ENCODE measurements at regions of chrX and their contacts with region 1.

Region 1: GRCh38 chrX:153708415-153708814 is 15.8 kb downstream of the BCAP31 start:
- DNase-seq: peak; percentile 77
- H3K4me3 ChIP-seq: no peak overlapping the region
- H3K27ac ChIP-seq: no peak overlapping the region
- H3K4me1 ChIP-seq: peaks cover 12% of the 10 kb centered on the region
- H3K27me3 ChIP-seq: no peaks in the 10 kb centered on the region
- CTCF ChIP-seq: peak; percentile 66 to 67
- POLR2A ChIP-seq: no peak

Region 2: GRCh38 chrX:153554519-153555167 is 153.8 kb before region 1 on chrX:
- CTCF ChIA-PET with region 1: interaction called, 11 read pairs
- POLR2A ChIA-PET with region 1: no interaction called
- dilution Hi-C with region 1: no loop called
- intact Hi-C with region 1: no loop called
- DNase-seq: peak; percentile 24
- H3K4me3 ChIP-seq: no peak overlapping the region
- H3K27ac ChIP-seq: no peak overlapping the region
- H3K4me1 ChIP-seq: no peaks in the 10 kb centered on the region
- H3K27me3 ChIP-seq: no peaks in the 10 kb centered on the region
- CTCF ChIP-seq: peak; percentile 48 to 71
- POLR2A ChIP-seq: no peak

Region 3: GRCh38 chrX:153687121-153688039 is 21.0 kb before region 1 on chrX and contains the start of gene SLC6A8:
- CTCF ChIA-PET with region 1: interaction called, 30 read pairs
- POLR2A ChIA-PET with region 1: interaction called, 3 read pairs
- dilution Hi-C with region 1: no loop called
- intact Hi-C with region 1: no loop called
- DNase-seq: peak; percentile 27
- H3K4me3 ChIP-seq: peak within 1 kb of the TSS in 1 of 3 experiments; percentile 40
- H3K27ac ChIP-seq: no peak within 1 kb of the TSS
- H3K4me1 ChIP-seq: peaks cover 4% of the 10 kb centered on the region
- H3K27me3 ChIP-seq: no peaks in the 10 kb centered on the region
- CTCF ChIP-seq: peak in 1 of 2 donors; percentile 55
- POLR2A ChIP-seq: peak; percentile 40
- total RNA-seq, gene SLC6A8: 23.6 and 28.8 TPM in 2 replicates

Region 4: GRCh38 chrX:153724252-153725040 is 16.0 kb after region 1 on chrX and contains the starts of genes ABCD1 and BCAP31:
- CTCF ChIA-PET with region 1: interaction called, 10 read pairs
- POLR2A ChIA-PET with region 1: no interaction called
- dilution Hi-C with region 1: no loop called
- intact Hi-C with region 1: no loop called
- DNase-seq: peak; percentile 84
- H3K4me3 ChIP-seq: peak within 1 kb of the TSS; percentile 41 to 73 (median 54)
- H3K27ac ChIP-seq: peak within 1 kb of the TSS; percentile 47
- H3K4me1 ChIP-seq: peaks cover 28% of the 10 kb centered on the region
- H3K27me3 ChIP-seq: no peaks in the 10 kb centered on the region
- CTCF ChIP-seq: no peak
- POLR2A ChIP-seq: peak; percentile 53
- total RNA-seq, gene ABCD1: 12.9 and 14.3 TPM in 2 replicates
- total RNA-seq, gene BCAP31: 198 and 203 TPM in 2 replicates

Region 5: DNA sequence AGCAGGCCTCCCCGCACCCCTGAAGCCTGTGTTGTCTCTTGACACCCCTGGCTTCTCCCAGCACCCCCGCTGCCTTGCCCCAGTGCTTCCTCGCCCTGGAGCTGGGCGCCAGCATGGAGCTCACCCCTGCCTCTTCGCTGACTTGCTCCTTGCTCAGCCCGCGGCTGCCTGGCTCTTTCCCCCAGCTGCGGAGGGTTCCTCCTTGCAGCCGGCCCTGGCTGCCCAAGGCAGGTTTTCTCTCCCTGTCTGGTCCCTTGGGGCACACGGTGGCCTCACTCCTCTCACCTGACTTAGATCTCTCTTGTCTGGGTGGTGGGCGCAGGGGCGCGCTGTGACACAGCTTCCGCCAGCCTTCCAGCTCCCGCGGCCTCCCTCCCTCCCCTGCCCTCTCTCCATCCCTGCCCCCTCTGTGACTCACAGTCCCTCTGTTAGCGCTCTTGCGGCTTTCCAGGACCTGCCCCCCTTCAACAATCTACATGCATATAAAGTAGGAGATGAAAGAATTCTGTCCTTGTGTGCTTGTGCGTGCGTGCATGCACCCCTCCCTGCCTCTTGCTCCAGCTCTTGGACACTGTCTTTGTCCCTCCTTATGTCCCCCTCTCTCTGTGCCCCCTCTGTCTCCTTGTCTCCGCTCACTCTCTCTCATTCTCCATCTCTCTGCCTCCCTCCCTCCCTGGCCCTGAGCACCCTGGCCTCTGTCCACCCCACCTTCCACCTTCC is 57.8 kb after region 1 on chrX:
- CTCF ChIA-PET with region 1: no interaction called
- POLR2A ChIA-PET with region 1: no interaction called
- dilution Hi-C with region 1: no loop called
- intact Hi-C with region 1: no loop called
- DNase-seq: peak; percentile 58
- H3K4me3 ChIP-seq: peak overlapping the region in 2 of 3 experiments; percentile 2 to 38
- H3K27ac ChIP-seq: peak overlapping the region; percentile 75
- H3K4me1 ChIP-seq: peaks cover 20% of the 10 kb centered on the region
- H3K27me3 ChIP-seq: no peaks in the 10 kb centered on the region
- CTCF ChIP-seq: no peak
- POLR2A ChIP-seq: no peak

Region 6: DNA sequence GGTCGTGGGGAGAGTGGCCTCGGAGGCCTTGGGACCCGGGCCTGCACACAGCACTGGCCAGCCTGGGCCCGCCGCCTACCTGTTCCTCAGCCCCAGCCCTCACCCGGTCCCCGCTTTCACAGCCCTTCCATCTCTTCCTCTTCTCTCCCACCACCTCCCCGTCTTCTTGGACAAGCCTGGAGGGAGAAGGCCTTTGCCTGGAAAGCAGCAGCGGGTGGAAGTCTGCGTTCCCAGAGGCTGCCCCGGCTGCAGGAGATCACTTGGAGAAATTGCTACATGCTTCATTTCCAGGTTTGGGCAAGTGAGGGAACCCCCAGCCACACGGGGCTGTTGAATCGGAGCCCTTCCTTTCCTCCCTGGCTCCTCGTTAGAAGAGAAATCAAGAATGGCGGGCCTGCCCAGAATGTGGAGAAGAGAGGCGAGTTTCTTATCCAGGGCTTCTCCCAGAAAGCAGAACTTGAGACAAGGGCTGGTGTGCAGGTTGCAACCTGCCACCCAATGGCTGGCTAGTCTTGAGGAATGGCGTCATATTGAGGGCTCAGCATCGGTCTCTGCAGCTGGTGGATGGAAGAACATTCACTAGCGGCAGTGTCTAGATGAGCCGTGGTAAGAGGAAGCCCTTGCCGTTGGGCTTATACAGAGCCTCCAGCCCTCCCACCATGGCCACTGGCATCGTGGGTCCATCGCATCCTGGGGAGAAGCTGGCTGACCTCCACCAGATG is 123.2 kb after region 1 on chrX:
- CTCF ChIA-PET with region 1: no interaction called
- POLR2A ChIA-PET with region 1: no interaction called
- dilution Hi-C with region 1: no loop called
- intact Hi-C with region 1: no loop called
- DNase-seq: no peak
- H3K4me3 ChIP-seq: no peak overlapping the region
- H3K27ac ChIP-seq: no peak overlapping the region
- H3K4me1 ChIP-seq: no peaks in the 10 kb centered on the region
- H3K27me3 ChIP-seq: peaks cover 31 to 38% of the 10 kb centered on the region in 2 experiments
- CTCF ChIP-seq: no peak
- POLR2A ChIP-seq: no peak

Region 7: DNA sequence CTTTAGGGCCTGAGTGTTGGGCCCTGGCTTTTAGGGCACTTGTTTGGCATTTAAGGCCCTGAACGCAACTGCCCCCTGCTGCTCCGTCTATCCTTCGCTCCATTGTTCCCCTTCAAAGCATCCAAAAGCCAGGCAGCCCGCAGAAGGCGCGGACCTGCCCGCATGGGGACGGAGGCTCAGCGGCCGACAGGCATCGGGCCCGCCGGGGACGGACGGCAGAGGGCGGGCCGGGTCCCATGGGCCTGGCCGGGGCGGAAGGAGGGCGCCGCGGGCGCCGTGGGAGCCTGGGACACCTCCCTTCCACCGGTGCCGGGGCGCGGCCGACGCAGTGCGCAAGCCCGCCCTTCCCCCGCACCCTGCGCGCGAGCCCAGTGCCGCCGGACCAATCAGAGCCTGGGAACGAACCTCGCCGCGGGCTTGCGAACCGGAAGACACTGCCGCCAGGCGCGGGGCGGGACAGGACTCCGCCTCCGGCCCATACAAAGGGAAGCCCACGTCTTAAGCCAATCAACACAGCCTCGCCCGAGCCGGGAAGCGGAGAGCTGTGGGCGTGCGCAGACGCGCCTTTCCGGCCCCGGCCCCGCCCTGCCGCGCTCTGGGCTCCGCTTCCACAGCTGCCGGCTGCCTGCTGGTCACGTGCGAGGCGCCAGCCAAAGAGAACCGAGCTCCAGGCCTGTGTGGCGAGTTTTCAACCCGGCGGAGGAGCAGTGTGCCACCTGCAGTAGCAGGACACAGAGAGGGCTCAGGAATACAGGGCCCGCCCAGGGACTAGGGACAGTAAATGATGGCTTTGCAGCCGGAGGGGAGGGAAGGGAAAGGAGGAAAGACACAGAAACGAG is 219.7 kb after region 1 on chrX:
- CTCF ChIA-PET with region 1: no interaction called
- POLR2A ChIA-PET with region 1: no interaction called
- dilution Hi-C with region 1: no loop called
- intact Hi-C with region 1: no loop called
- DNase-seq: peak; percentile 98
- H3K4me3 ChIP-seq: peak overlapping the region in 2 of 3 experiments; percentile 44 to 49
- H3K27ac ChIP-seq: peak overlapping the region; percentile 100
- H3K4me1 ChIP-seq: peaks cover 44% of the 10 kb centered on the region
- H3K27me3 ChIP-seq: no peaks in the 10 kb centered on the region
- CTCF ChIP-seq: no peak
- POLR2A ChIP-seq: no peak